HEK293 (cell line): ENCODE measurements at regions of chr17 and their contacts with region 1.

Region 1: GRCh38 chr17:16438557-16439302 is 23.4 kb downstream of the TRPV2 start:
- H3K4me3 ChIP-seq: peak overlapping the region; percentile 83
- H3K27ac ChIP-seq: peak overlapping the region; percentile 90
- H3K4me1 ChIP-seq: no peaks in the 10 kb centered on the region
- CTCF ChIP-seq: no peak

Region 2: DNA sequence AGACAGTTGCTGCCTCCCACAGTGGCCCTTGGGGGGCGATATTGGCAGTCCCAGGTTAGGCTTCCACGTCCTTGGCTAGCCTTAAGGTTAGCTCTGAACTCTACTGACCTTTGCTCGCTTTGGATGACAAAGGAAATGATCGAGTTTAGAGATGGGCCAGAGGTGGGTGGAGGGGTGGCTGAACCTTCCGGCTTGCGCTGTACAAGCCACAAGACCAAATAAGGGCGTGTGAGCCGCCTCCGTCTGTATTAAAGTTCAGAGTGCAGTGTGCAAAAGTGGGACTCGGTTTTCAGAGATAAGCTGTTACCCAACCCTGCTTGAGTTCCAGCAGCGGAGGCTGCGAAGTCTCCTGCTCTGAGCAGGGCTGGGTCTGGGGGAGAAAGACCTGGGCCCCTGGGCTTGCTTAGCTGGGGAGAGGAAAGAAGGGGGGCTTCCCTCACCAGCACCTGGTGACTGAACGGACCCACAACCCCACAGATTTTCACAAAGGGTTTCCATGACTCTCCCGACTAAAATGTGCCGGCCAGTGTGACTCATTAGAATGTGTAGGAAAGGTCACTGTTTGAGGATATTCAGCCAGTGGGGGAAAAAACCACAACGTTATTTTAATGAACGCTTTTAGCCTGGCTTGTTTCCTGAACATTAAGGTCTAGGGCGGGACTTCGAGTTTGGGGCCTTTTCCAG is 152.6 kb before region 1 on chr17:
- CTCF ChIA-PET with region 1: no interaction called
- POLR2A ChIA-PET with region 1: interaction called, 10 read pairs
- H3K4me3 ChIP-seq: peak overlapping the region; percentile 3
- H3K27ac ChIP-seq: peak overlapping the region; percentile 72
- H3K4me1 ChIP-seq: peaks cover 14% of the 10 kb centered on the region
- CTCF ChIP-seq: peak; percentile 61

Region 3: DNA sequence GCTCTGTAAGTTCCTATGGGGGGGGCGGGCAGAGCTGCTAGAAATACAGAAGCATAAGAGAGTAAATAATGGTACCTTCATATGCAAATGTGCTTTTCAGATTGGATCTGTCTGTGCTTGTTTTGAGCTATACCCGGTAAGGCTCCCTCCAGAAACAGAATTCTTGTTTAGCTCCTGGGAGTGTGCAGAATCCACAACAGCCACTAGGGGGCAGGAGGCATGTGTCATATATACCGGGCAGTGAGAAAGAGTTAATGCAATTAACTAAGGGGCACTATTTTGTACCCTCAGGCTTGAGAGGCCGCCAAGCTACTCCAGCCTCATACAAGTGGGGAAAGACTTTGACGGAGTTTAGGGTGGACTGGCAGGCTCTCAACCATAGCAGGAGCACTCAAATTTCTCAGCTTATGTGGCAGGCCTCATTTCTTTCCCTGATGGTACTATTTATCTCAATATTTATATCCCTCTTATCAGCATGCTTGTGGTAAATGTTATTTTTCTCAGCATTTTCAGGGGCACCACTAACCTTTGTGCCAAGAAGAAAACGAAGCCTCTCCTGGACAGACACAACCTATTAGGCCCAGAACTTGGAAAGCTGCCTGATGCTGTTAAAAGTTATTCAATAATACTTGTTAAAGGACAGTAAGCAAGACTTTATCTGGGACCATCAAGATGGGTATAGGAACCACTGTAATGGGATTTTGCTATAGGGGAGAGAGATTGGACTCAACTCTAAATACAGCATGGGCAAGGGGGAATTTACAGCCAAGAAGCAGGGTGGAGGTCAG is 74.8 kb before region 1 on chr17:
- CTCF ChIA-PET with region 1: interaction called, 21 read pairs
- POLR2A ChIA-PET with region 1: interaction called, 24 read pairs
- H3K4me3 ChIP-seq: no peak overlapping the region
- H3K27ac ChIP-seq: no peak overlapping the region
- H3K4me1 ChIP-seq: peaks cover 4% of the 10 kb centered on the region
- CTCF ChIP-seq: peak; percentile 80

Region 4: GRCh38 chr17:16407911-16408588 is 30.7 kb before region 1 on chr17:
- CTCF ChIA-PET with region 1: no interaction called
- POLR2A ChIA-PET with region 1: interaction called, 19 read pairs
- H3K4me3 ChIP-seq: no peak overlapping the region
- H3K27ac ChIP-seq: no peak overlapping the region
- H3K4me1 ChIP-seq: peaks cover 3% of the 10 kb centered on the region; the same call in 1 of the 2 replicates
- CTCF ChIP-seq: no peak

Region 5: GRCh38 chr17:16428098-16428882 is 10.4 kb before region 1 on chr17:
- CTCF ChIA-PET with region 1: interaction called, 19 read pairs
- POLR2A ChIA-PET with region 1: interaction called, 41 read pairs
- H3K4me3 ChIP-seq: no peak overlapping the region
- H3K27ac ChIP-seq: no peak overlapping the region
- H3K4me1 ChIP-seq: no peaks in the 10 kb centered on the region
- CTCF ChIP-seq: peak; percentile 84

Region 6: GRCh38 chr17:16521070-16521727 is 82.5 kb after region 1 on chr17:
- CTCF ChIA-PET with region 1: interaction called, 12 read pairs
- POLR2A ChIA-PET with region 1: interaction called, 11 read pairs
- H3K4me3 ChIP-seq: no peak overlapping the region
- H3K27ac ChIP-seq: no peak overlapping the region
- H3K4me1 ChIP-seq: peaks cover 3% of the 10 kb centered on the region; the same call in 1 of the 2 replicates
- CTCF ChIP-seq: peak; percentile 80